B cell (primary cell): ENCODE measurements at regions of chr19 and their contacts with region 1.

Region 1: DNA sequence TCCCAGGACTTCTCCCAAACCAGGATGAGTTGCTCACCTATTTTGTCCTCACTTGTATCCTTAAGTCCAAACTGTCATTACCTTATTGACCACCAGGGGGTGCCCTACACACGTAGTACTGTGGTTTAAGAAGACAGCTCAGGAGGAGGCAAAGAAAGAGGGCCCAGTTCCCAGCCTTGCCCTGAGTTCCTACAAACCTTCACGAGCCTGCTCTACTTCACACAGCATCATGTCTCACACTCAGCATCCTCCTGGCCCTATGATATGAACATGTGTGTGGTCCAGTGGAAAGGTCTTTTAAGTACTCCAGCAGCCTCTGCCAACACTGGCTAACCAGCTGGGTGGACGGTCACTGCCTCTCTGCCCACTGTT is 8.1 kb upstream of the ZNF784 start:
- DNase-seq: peak; percentile 94
- ATAC-seq: peak; percentile 53
- H3K4me3 ChIP-seq: no peak overlapping the region
- H3K4me3 Mint-ChIP-seq: peak overlapping the region; percentile 64
- H3K27ac ChIP-seq: peak overlapping the region in 1 of 2 donors; percentile 11
- H3K27ac Mint-ChIP-seq: peak overlapping the region; percentile 43
- H3K4me1 ChIP-seq: peaks cover 20 to 48% of the 10 kb centered on the region in 2 donors
- H3K4me1 Mint-ChIP-seq: peaks cover 41% of the 10 kb centered on the region
- H3K27me3 ChIP-seq: no peaks in the 10 kb centered on the region
- H3K27me3 Mint-ChIP-seq: no peaks in the 10 kb centered on the region
- CTCF ChIP-seq: peak; percentile 71

Region 2: DNA sequence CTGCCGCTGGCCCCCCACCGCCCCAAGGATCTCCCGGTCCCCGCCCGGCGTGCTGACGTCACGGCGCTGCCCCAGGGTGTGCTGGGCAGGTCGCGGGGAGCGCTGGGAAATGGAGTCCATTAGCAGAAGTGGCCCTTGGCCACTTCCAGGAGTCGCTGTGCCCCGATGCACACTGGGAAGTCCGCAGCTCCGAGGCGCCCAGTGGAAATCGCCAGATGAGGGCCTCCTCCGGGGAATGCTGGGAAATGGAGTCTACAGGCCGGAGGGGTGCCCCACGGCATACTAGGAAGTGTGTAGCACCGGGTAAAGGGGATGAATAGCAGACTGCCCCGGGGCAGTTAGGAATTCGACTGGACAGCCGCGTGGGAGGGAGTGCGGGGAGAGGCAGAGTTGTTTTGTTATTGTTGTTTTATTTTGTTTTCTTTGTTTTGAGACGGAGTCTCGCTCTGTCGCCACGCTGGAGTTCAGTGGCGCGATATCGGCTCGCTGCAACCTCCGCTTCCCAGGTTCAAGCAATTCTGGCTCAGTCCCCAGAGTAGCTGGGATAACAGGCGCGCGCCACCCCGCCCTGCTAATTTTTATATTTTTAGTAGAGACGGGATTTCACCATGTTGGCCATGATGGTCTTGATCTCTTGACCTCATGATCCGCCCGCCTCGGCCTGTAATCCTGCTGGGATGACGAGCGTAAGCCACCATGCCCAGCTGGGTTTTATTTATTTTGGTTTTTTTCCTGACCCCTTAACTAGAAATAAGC is 514.6 kb before region 1 on chr19 and contains the start of gene PPP1R12C:
- CTCF ChIA-PET with region 1: no interaction called
- POLR2A ChIA-PET with region 1: no interaction called
- intact Hi-C with region 1: loop called (anchors 10 kb)
- DNase-seq: peak; percentile 95
- ATAC-seq: peak; percentile 95
- H3K4me3 ChIP-seq: peak within 1 kb of the TSS; percentile 75 to 98 (median 81)
- H3K4me3 Mint-ChIP-seq: peak within 1 kb of the TSS; percentile 98
- H3K27ac ChIP-seq: peak within 1 kb of the TSS; percentile 31 to 77
- H3K27ac Mint-ChIP-seq: peak within 1 kb of the TSS; percentile 97
- H3K4me1 ChIP-seq: peaks cover 12 to 42% of the 10 kb centered on the region in 2 donors
- H3K4me1 Mint-ChIP-seq: peaks cover 50% of the 10 kb centered on the region
- H3K27me3 ChIP-seq: no peaks in the 10 kb centered on the region
- H3K27me3 Mint-ChIP-seq: peaks cover 3% of the 10 kb centered on the region
- CTCF ChIP-seq: no peak
- total RNA-seq, gene PPP1R12C: 174 and 179 TPM in 2 replicates

Region 3: DNA sequence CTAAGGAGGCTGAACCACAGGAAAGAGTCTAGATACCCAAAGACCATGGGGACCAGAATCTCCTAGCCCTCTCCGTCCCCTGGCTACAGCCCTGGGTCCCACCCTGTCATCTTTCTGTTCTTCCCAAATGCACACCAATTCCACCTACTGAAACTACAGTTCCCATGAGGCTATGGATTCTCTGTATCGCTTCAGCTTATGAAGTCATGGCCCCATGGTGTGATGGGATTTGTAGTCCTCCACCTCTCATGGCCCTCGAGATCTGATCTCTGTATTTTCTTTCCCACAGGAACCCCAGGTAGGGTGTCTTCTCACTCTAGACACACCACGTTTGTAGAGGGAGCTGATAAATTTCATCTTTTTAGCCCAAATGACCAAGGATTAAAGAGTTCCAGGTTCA is 434.9 kb before region 1 on chr19:
- CTCF ChIA-PET with region 1: no interaction called
- POLR2A ChIA-PET with region 1: no interaction called
- intact Hi-C with region 1: no loop called
- DNase-seq: no peak
- ATAC-seq: no peak
- H3K4me3 ChIP-seq: no peak overlapping the region
- H3K4me3 Mint-ChIP-seq: no peak overlapping the region
- H3K27ac ChIP-seq: no peak overlapping the region
- H3K27ac Mint-ChIP-seq: no peak overlapping the region
- H3K4me1 ChIP-seq: no peaks in the 10 kb centered on the region
- H3K4me1 Mint-ChIP-seq: no peaks in the 10 kb centered on the region
- H3K27me3 ChIP-seq: peaks cover 0 to 16% (median 0%) of the 10 kb centered on the region in 4 experiments
- H3K27me3 Mint-ChIP-seq: peaks cover 34% of the 10 kb centered on the region
- CTCF ChIP-seq: no peak

Region 4: DNA sequence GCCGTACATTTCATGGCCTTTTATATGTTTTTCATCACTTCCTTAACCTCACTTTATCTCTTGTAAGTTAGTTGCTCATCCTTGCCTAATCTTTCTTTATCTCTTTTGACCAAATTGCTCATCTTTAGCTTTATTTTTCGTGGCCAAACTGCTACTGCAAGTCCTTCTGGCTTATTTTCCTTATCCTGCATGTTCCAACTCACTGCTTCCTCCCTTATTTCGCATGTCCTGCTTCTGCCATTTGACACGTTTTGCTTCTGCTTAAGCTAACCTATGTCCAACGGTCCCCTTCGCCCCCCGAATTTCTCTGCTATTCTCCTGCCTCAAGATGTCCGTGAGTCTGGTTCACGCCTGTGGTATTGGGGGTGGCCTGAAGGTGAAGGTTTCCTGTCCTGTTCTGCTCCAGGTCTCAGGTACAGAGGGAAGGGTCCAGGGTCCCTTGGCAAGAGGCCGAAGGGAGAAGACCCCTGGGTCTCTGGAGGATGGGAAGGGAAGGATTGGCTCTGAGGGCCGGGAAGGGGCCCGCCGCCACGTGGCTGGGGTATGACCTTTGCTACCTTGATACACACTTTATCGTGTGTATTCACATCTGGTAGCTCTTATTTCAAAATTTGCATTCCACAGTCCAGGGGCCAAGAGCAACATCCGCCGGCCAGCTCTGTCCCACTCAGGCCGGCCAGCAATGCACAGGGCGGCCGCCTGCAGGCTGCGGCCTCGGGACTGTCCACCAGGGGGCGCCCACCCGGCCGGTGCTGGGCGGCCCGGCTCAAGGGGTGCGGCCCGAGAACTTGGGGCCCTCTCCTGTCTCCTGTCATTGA is 165.0 kb before region 1 on chr19:
- CTCF ChIA-PET with region 1: interaction called, 34 read pairs
- POLR2A ChIA-PET with region 1: no interaction called
- intact Hi-C with region 1: loop called (anchors 1 kb)
- DNase-seq: peak; percentile 79
- ATAC-seq: peak; percentile 99
- H3K4me3 ChIP-seq: no peak overlapping the region
- H3K4me3 Mint-ChIP-seq: no peak overlapping the region
- H3K27ac ChIP-seq: no peak overlapping the region
- H3K27ac Mint-ChIP-seq: no peak overlapping the region
- H3K4me1 ChIP-seq: peaks cover 4 to 7% of the 10 kb centered on the region in 2 donors
- H3K4me1 Mint-ChIP-seq: peaks cover 6% of the 10 kb centered on the region
- H3K27me3 ChIP-seq: no peaks in the 10 kb centered on the region
- H3K27me3 Mint-ChIP-seq: no peaks in the 10 kb centered on the region
- CTCF ChIP-seq: peak; percentile 99

Region 5: GRCh38 chr19:55599468-55600279 is 32.8 kb before region 1 on chr19 and contains the start of gene FIZ1:
- CTCF ChIA-PET with region 1: interaction called, 11 read pairs
- POLR2A ChIA-PET with region 1: interaction called, 4 read pairs
- intact Hi-C with region 1: no loop called
- DNase-seq: peak; percentile 99
- ATAC-seq: peak; percentile 70
- H3K4me3 ChIP-seq: peak within 1 kb of the TSS; percentile 59 to 97 (median 82)
- H3K4me3 Mint-ChIP-seq: peak within 1 kb of the TSS; percentile 100
- H3K27ac ChIP-seq: peak within 1 kb of the TSS; percentile 86 to 94
- H3K27ac Mint-ChIP-seq: peak within 1 kb of the TSS; percentile 99
- H3K4me1 ChIP-seq: peaks cover 9 to 24% of the 10 kb centered on the region in 2 donors
- H3K4me1 Mint-ChIP-seq: peaks cover 25% of the 10 kb centered on the region
- H3K27me3 ChIP-seq: no peaks in the 10 kb centered on the region
- H3K27me3 Mint-ChIP-seq: no peaks in the 10 kb centered on the region
- CTCF ChIP-seq: no peak
- total RNA-seq, gene FIZ1: 21.4 and 26.4 TPM in 2 replicates

Region 6: DNA sequence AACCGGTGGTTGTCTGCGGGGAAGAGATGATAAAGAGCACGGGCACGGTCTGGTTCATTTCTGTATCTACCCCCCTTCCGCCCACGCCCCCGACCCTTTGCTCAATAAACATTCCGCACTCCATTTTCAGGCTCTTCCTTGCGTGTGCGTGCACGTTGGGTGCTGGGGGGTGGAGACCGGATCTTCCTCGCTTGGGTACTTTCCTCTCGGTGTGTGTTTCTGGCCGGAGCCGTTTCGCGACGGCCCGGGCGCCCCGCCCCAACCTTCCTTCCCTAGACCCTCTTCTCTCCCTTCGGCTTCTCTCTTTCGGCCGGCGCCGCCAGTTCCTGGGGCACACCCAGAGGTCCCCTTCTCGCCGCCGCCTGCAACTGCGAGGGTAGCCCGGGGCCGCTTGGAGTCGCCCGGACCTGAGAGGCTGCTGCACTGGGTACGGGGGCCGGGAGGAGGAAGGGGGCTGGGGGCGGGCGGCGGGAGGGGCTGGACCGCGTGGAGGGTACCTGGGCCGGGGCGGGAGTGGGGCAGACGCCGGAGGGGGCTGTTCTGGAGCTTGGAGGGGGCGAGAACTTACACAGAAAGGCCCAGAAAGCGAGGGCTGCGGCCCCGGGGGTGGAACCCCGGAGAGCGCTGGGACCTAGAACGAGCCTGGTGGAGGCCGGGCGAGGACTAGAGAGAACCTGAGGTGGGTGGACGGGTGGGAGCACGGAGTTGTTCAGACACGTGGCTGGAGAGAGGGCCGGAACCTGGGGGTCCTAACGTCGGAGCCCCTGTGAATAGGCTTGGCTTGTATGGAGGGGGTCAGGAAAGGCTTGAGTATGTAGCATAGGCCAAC is 11.1 kb after region 1 on chr19 and contains the start of gene ZNF581:
- CTCF ChIA-PET with region 1: interaction called, 131 read pairs
- POLR2A ChIA-PET with region 1: interaction called, 55 read pairs
- intact Hi-C with region 1: loop called (anchors 1 kb)
- DNase-seq: peak; percentile 90
- ATAC-seq: peak; percentile 36
- H3K4me3 ChIP-seq: peak within 1 kb of the TSS; percentile 59 to 85 (median 78)
- H3K4me3 Mint-ChIP-seq: peak within 1 kb of the TSS; percentile 88
- H3K27ac ChIP-seq: peak within 1 kb of the TSS; percentile 79 to 82
- H3K27ac Mint-ChIP-seq: peak within 1 kb of the TSS; percentile 98
- H3K4me1 ChIP-seq: peaks cover 32 to 68% of the 10 kb centered on the region in 2 donors
- H3K4me1 Mint-ChIP-seq: peaks cover 60% of the 10 kb centered on the region
- H3K27me3 ChIP-seq: no peaks in the 10 kb centered on the region
- H3K27me3 Mint-ChIP-seq: no peaks in the 10 kb centered on the region
- CTCF ChIP-seq: no peak
- total RNA-seq, gene ZNF581: 47.3 and 51.3 TPM in 2 replicates

Region 7: GRCh38 chr19:55703790-55704215 is 71.4 kb after region 1 on chr19:
- CTCF ChIA-PET with region 1: interaction called, 12 read pairs
- POLR2A ChIA-PET with region 1: no interaction called
- intact Hi-C with region 1: no loop called
- DNase-seq: peak; percentile 57
- ATAC-seq: peak; percentile 66
- H3K4me3 ChIP-seq: no peak overlapping the region
- H3K4me3 Mint-ChIP-seq: no peak overlapping the region
- H3K27ac ChIP-seq: no peak overlapping the region
- H3K27ac Mint-ChIP-seq: no peak overlapping the region
- H3K4me1 ChIP-seq: peaks cover 0 to 8% of the 10 kb centered on the region in 2 donors
- H3K4me1 Mint-ChIP-seq: peaks cover 8% of the 10 kb centered on the region
- H3K27me3 ChIP-seq: no peaks in the 10 kb centered on the region
- H3K27me3 Mint-ChIP-seq: no peaks in the 10 kb centered on the region
- CTCF ChIP-seq: peak; percentile 78

Region 8: GRCh38 chr19:55962186-55962585 is 329.7 kb after region 1 on chr19:
- CTCF ChIA-PET with region 1: no interaction called
- POLR2A ChIA-PET with region 1: no interaction called
- intact Hi-C with region 1: no loop called
- DNase-seq: no peak
- ATAC-seq: no peak
- H3K4me3 ChIP-seq: no peak overlapping the region
- H3K4me3 Mint-ChIP-seq: no peak overlapping the region
- H3K27ac ChIP-seq: no peak overlapping the region
- H3K27ac Mint-ChIP-seq: no peak overlapping the region
- H3K4me1 ChIP-seq: no peaks in the 10 kb centered on the region
- H3K4me1 Mint-ChIP-seq: no peaks in the 10 kb centered on the region
- H3K27me3 ChIP-seq: no peaks in the 10 kb centered on the region
- H3K27me3 Mint-ChIP-seq: no peaks in the 10 kb centered on the region
- CTCF ChIP-seq: no peak

Region 9: GRCh38 chr19:56333505-56333904 is 701.1 kb after region 1 on chr19:
- CTCF ChIA-PET with region 1: interaction called, 17 read pairs
- POLR2A ChIA-PET with region 1: no interaction called
- intact Hi-C with region 1: no loop called
- DNase-seq: peak; percentile 68
- ATAC-seq: peak; percentile 60
- H3K4me3 ChIP-seq: no peak overlapping the region
- H3K4me3 Mint-ChIP-seq: no peak overlapping the region
- H3K27ac ChIP-seq: no peak overlapping the region
- H3K27ac Mint-ChIP-seq: no peak overlapping the region
- H3K4me1 ChIP-seq: no peaks in the 10 kb centered on the region
- H3K4me1 Mint-ChIP-seq: no peaks in the 10 kb centered on the region
- H3K27me3 ChIP-seq: no peaks in the 10 kb centered on the region
- H3K27me3 Mint-ChIP-seq: peaks cover 26% of the 10 kb centered on the region
- CTCF ChIP-seq: peak; percentile 84